ENCODE measurements at regions of chr17 and their contacts with region 1.

Region 1: DNA sequence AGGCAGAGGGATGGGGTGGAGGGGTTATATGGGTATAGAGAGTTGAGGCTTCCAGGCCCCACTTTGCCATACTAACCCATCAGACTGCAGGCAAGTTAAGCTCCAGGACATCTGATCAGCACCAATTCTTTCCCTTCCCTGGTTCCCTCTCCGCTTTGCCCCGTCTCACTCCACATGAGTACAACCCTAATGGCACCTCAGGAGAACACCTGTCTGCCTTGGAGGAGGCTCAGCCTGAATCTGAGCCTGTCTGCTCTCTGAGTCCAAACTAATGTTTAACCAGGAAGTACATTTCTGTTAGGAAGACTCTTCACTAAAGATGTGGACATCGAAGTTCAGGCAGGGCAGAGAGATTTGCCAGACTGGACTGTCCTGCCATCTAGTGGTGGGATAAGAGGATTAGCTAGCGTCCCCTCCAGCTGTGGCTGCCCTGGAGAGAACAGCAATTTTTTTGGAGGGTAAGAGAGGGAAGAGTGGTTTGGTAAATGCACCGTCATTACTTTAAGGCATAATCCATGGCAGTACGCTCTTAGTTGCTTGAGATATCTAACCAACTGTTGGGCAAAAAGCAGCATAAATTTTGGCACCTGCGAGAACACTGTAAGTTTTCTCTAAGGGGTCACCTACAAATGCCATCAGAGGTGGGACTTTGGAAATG is 29.2 kb upstream of the LRRC75A start:
- DNase-seq: no peak
- H3K4me3 ChIP-seq: no peak overlapping the region
- H3K27ac ChIP-seq: no peak overlapping the region
- H3K4me1 ChIP-seq: peaks cover 0 to 12% (median 2%) of the 10 kb centered on the region in 3 donors
- H3K27me3 ChIP-seq: peaks cover 0 to 37% (median 0%) of the 10 kb centered on the region in 4 donors
- CTCF ChIP-seq: peak; percentile 70 to 91 (median 86)
- POLR2A ChIP-seq: no peak

Region 2: DNA sequence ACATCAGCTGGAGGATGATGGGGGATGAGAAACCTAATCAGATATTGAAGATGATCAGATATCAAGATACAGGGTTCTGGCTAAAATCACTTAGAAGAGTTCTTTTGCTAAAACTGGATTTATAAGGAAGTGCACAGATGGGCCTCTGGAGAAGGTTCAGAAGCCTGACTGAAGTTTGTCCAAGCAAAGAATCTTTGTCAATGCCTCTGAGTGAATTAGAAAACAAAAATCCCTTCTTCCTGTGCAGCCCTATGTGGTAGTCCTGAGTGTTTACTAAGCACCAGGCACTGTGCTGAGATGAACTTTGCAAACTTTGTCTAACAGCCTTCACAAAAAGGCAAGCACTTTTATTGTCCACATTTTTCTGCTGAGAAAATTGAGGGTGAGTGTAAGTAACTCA is 156.6 kb before region 1 on chr17:
- intact Hi-C with region 1: loop called (anchors 5 kb)
- DNase-seq: no peak
- H3K4me3 ChIP-seq: no peak overlapping the region
- H3K27ac ChIP-seq: no peak overlapping the region
- H3K4me1 ChIP-seq: peaks cover 0 to 9% (median 0%) of the 10 kb centered on the region in 3 donors
- H3K27me3 ChIP-seq: no peaks in the 10 kb centered on the region
- CTCF ChIP-seq: no peak
- POLR2A ChIP-seq: no peak

Region 3: DNA sequence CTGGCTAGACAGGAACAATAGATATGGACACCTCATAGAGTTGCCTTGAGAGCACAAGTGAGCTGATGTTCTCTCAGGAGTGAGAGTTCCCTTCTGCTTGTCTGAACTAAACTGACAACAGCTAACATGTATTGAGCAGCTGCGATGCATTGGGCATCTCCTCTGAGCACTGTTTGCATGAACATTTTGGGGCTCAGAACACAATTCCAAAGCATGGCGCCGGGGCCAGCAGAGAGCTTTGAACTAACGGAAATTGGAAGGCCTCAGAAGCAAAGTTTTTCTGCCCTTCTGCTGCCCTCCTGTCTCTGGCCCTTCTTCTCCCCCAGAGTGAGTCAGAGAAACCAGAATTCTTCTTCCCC is 67.7 kb before region 1 on chr17:
- intact Hi-C with region 1: loop called (anchors 5 kb)
- DNase-seq: no peak
- H3K4me3 ChIP-seq: no peak overlapping the region
- H3K27ac ChIP-seq: no peak overlapping the region
- H3K4me1 ChIP-seq: peaks cover 0 to 17% (median 3%) of the 10 kb centered on the region in 3 donors
- H3K27me3 ChIP-seq: no peaks in the 10 kb centered on the region
- CTCF ChIP-seq: no peak
- POLR2A ChIP-seq: no peak